Posterior cingulate gyrus (tissue), 11 donors: ENCODE measurements at regions of chr14 and their contacts with region 1.

Region 1: GRCh38 chr14:77151918-77152588 is 10.5 kb upstream of the ZDHHC22 start:
- DNase-seq: no peak

Region 2: DNA sequence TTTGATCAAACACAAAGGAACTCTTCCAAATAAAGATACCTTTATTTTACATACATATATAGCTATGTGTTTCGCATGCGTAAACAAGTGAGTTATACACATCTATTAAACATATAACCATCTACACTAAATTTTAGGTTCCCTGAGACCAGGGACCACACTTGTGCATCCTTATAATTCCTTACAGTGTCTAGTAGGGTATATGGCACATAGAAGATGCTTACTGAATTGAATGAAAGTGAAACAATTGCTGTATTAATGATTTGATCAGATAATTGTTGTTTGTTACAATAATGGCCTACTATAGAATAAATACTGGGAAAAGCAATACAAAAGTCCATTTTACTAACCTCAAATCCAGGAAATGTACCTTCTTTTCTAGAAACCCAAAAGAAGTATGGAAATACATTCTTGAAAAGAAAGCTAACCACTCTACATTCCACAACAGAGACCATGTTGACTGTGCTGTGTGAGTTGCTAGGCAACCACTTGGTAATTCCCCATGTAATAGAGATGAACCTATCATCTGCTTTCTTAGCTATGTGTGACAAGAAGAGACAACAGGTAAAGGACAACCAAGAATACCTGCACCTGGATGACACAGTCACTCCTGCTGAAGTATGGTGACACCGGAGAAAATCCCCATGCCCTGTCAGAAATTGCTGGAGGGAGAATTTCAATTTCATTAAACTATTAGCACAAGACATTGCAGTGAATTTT is 65.9 kb before region 1 on chr14:
- intact Hi-C with region 1: no loop called
- DNase-seq: no peak

Region 3: DNA sequence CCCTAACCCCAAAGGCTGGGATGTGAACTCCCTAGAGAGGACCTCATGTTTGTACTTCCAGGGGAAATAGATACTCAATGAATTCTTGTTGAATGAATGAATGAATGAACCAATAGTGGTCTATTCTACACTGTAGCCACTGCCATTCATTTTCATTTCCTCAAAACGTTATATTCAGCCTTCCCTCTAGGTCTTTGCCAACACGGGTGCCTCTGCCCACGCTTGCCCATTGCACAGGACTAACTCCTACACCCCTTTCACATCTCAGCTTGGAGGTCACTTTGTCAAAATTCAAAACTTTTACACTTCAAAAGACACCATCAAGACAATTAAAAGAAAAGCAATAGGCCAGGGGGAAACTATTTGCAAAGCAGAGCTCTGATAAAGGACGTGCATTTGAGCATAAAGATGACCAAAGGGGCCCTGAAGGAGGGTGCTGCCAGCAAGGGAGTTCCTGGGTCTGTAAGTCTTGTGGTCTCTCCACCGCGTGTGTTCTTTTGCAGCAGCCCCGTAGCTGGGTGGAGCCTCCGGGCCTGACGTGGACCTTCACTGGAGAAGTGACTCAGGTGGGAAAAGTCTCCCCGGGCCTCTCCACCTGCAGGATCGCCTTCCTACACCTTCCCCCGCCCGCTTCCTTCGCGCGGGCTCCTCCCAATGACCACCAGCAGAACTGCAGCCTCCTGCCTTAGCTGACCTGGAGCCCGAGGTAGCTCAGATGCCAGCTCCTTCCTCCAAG is 61.1 kb after region 1 on chr14:
- intact Hi-C with region 1: loop called (anchors 5 kb)
- DNase-seq: peak; percentile 31 to 95 (median 64)

Region 4: DNA sequence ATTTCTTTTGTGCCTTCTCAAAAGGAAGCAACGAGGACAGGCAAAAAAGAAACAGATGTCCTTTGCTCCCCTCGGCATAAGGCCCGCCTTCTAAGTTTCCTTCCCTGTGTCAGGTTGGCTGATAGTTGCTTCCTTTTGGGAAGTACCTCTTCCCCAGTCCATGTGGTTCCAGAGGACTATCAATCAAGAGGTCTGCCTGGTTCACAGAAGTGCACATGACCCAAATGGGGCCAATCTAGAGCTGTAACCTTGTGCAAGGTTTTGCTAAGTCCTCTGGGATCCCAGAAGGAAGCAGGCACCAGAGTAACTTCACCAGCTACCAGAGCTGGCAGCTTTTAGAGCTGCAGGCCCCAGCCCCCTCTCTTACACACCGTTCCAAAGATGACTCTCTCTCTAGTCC is 72.2 kb after region 1 on chr14:
- intact Hi-C with region 1: no loop called
- DNase-seq: no peak

Region 5: GRCh38 chr14:77301103-77301502 is 149.1 kb after region 1 on chr14:
- intact Hi-C with region 1: loop called (anchors 5 kb)
- DNase-seq: peak; percentile 62 to 97 (median 91)

Region 6: DNA sequence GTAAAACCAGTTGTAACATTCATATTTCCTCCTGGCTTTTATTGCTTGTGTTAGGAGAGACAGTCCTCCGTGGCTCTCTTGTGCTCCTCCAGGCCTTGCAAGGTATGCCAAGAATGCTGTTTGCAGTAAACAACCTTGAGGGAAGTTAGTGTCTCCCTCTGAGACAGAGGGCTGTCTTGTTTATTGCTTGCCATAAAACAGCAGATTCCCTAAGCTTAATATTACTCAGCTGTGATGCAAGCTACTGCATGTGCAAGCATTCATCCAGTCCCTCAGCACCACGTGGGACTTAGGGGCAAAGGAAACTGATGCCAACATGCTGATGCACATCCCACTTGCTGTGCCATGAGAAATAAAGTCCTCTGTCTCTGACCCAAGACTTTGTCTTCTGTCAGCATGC is 162.0 kb after region 1 on chr14:
- intact Hi-C with region 1: loop called (anchors 5 kb)
- DNase-seq: peak in 4 of 10 donors; percentile 43 to 86 (median 50)